ENCODE measurements at regions of chr7 and their contacts with region 1.

Region 1: DNA sequence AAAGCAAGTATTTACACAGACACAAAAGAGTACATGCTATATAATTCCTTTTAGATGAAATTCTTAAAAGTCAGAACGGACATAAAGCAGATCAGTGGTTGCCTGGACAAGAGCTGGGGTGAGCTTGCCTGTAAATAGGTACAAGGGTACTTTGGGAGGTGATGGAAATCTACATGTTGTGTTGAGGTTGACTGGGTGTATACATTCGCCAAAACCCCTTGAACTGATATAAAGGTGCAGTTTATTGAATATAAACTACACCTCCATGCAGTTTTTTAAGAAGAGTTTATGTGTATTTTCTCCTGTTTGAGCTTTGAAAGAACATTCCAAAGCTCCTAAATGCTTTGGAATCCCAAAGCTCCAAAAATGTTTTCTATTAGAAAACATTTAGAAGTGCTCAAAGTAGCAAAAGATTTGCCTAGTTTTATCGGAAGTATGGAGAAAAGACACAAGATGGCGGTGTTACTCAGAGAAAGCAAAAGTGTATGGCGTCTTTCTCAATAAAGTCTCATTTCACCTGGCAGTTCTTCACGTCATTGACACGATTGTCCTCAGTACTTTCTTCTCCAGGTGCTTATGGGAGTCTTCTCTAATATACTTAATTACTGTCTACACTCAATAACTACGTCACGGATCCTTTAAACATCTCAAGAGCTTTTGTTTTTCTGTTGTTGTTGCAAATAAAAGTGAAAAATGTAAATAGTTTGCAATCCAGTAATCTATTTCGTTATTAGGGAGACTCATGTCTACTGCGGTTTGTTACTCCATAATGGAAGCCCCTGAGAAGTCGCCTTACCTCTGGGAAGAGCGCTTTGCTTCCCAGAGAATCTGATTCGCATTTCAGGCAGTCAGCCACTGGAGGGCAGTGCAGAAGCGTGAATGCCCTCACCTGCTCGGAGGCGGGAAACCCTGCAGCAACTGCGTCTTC is 14.7 kb upstream of the SEC61G start:
- DNase-seq: peak; percentile 50 to 79
- ATAC-seq: peak; percentile 79 to 93 (median 87)
- H3K4me3 ChIP-seq: peak overlapping the region; percentile 37
- H3K4me3 Mint-ChIP-seq: peak overlapping the region; percentile 83
- H3K27ac ChIP-seq: no peak overlapping the region
- H3K27ac Mint-ChIP-seq: no peak overlapping the region
- H3K4me1 ChIP-seq: no peaks in the 10 kb centered on the region
- H3K4me1 Mint-ChIP-seq: peaks cover 4 to 9% of the 10 kb centered on the region in 2 donors
- H3K27me3 ChIP-seq: peaks cover 6% of the 10 kb centered on the region
- H3K27me3 Mint-ChIP-seq: peaks cover 31 to 32% of the 10 kb centered on the region in 2 donors
- CTCF ChIP-seq: peak; percentile 60

Region 2: DNA sequence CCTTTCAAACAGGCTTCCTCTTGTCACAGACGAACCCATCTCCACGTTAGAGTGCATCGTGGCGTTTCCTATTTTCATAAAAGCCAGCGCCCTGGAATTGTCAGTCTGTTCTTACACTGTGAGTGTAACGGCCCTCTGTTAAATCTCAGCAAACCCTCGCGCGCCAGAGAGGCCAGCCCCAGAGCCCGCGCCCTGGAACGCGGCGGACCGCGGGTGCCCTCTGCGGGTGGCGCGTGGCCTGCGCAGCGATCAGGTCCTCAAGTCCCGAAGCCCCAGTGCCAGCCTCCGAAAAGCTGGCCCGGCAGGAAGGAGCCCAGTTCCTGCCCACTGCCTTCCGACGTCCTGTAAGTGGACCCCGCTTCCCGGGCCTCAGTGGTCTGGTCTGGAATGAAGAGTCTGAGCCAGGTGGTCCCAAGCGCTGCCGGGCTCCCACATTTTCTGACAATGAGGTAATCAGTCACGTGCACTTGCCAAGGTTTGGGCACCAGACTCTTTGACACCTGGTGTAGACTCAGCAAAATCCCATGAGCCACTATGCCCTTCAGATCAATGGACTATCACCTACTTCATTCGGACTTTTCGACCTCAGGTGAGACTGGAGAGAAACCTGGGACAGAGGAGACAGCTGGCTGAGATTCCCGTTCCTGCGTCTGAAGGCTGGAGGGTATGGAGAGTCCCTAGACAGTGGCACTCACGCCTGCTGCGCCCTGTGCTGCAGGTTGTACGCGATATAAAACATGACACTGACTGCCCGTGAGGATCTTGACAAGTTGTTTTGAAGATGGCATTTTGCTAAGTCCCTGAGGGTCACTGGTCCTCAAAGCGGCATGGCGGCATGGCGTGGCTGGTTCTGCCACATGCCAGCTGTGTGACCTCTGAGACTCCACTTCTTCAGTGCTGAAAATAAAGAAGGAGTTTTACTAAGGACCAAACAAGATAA is 482.0 kb after region 1 on chr7:
- intact Hi-C with region 1: loop called (anchors 1 kb)
- DNase-seq: peak; percentile 52 to 80
- ATAC-seq: peak; percentile 87 to 96 (median 90)
- H3K4me3 ChIP-seq: peak overlapping the region; percentile 26
- H3K4me3 Mint-ChIP-seq: peak overlapping the region; percentile 84
- H3K27ac ChIP-seq: no peak overlapping the region
- H3K27ac Mint-ChIP-seq: peak overlapping the region in 1 of 2 donors; percentile 76
- H3K4me1 ChIP-seq: peaks cover 16% of the 10 kb centered on the region
- H3K4me1 Mint-ChIP-seq: peaks cover 11 to 12% of the 10 kb centered on the region in 2 donors
- H3K27me3 ChIP-seq: peaks cover 19% of the 10 kb centered on the region
- H3K27me3 Mint-ChIP-seq: peaks cover 23 to 63% of the 10 kb centered on the region in 2 donors
- CTCF ChIP-seq: peak; percentile 12

Region 3: DNA sequence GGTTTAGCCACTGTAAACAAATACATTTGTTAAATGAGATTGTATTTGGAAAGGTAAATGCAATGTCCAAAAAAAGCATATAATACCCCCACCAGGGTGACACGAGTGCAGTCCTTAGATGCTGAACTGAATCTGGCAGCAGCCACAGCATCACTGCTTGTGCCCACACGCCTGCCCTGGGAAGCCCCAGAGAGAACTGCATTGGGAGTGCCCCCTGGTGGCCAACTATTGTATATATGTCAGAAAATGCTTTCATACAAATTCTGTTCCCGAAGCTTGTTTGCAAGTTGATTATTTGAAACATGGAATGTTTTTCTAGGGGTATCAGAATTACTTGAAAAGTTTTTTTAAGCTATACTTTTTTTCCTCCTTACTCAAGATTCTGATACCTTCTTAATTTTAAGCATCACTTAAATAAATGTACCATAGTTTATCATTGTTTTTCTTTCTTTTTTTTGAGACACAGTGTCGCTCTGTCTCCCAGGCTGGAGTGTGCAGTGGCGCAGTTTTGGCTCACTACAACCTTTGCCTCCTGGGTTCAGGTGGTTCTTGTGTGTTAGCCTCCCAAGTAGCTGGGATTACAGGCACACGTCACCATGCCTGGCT is 641.5 kb after region 1 on chr7:
- intact Hi-C with region 1: loop called (anchors 2 kb)
- DNase-seq: peak; percentile 70 to 90
- ATAC-seq: peak; percentile 94 to 100 (median 99)
- H3K4me3 ChIP-seq: no peak overlapping the region
- H3K4me3 Mint-ChIP-seq: no peak overlapping the region
- H3K27ac ChIP-seq: no peak overlapping the region
- H3K27ac Mint-ChIP-seq: no peak overlapping the region
- H3K4me1 ChIP-seq: no peaks in the 10 kb centered on the region
- H3K4me1 Mint-ChIP-seq: peaks cover 0 to 4% of the 10 kb centered on the region in 2 donors
- H3K27me3 ChIP-seq: no peaks in the 10 kb centered on the region
- H3K27me3 Mint-ChIP-seq: no peaks in the 10 kb centered on the region
- CTCF ChIP-seq: peak; percentile 92